SK-N-SH (cell line): ENCODE measurements at regions of chr12 and their contacts with region 1.

Region 1: GRCh38 chr12:26011099-26011498 is 52.6 kb downstream of the RASSF8 start:
- DNase-seq: no peak
- H3K4me3 ChIP-seq: no peak overlapping the region
- H3K27ac ChIP-seq: peak overlapping the region; percentile 71 to 77
- H3K4me1 ChIP-seq: peaks cover 24 to 29% of the 10 kb centered on the region in 2 experiments
- H3K27me3 ChIP-seq: no peaks in the 10 kb centered on the region
- CTCF ChIP-seq: no peak
- EP300 ChIP-seq: peak; percentile 3 to 11; a peak in 1 of 4 replicates
- RAD21 ChIP-seq: no peak

Region 2: DNA sequence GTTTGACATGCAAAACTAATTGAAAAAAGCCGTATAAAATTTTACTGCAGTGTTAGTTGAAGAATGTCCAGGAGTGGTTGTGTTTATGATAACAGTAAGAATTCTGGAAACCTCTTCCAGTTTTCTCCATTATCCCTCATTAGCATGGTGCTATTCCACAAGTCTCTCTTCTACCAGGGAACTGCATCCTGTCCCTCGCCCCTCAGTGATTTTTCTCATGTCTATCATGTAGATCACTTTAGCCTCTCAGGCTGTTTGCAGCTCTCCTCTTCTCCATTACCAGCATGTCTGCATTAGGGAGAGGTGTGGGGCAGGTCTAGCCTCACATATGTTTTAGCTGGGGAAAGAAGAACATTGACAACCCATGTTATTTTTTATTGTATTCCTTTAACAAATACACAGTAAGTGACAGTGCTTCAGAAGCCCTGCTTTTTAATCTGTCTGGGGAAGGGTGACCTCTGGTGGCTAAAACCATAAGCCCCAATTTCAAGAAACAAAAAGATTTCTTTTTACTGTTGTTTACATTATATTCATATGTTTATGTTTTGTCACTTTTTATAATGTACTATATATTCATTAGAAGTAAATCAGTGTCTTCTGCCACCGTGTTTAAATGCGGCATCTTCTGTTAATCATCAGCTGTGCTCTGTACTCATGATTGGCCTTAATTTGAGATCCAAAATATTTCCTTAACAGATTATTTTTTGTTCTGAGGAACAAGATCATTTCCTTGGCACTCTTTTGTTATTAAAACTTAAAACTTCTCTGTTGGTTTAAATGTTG is 18.0 kb after region 1 on chr12:
- CTCF ChIA-PET with region 1: interaction called, 10 read pairs
- POLR2A ChIA-PET with region 1: no interaction called
- DNase-seq: peak; percentile 52
- H3K4me3 ChIP-seq: no peak overlapping the region; a peak in 1 of 4 replicates
- H3K27ac ChIP-seq: peak overlapping the region; percentile 54 to 68
- H3K4me1 ChIP-seq: peaks cover 19 to 23% of the 10 kb centered on the region in 2 experiments; a peak in 3 of 4 replicates
- H3K27me3 ChIP-seq: no peaks in the 10 kb centered on the region
- CTCF ChIP-seq: peak; percentile 94
- EP300 ChIP-seq: no peak
- RAD21 ChIP-seq: peak; percentile 88